PC-3 (cell line): ENCODE measurements at regions of chr19 and their contacts with region 1.

Region 1: GRCh38 chr19:13588957-13589833 is 82.9 kb upstream of the CACNA1A start:
- DNase-seq: peak; percentile 84
- ATAC-seq: peak; percentile 98
- H3K4me3 ChIP-seq: peak overlapping the region; percentile 51; the same call in 1 of the 2 replicates
- H3K27ac ChIP-seq: no peak overlapping the region
- H3K4me1 ChIP-seq: no peaks in the 10 kb centered on the region
- H3K27me3 ChIP-seq: no peaks in the 10 kb centered on the region
- CTCF ChIP-seq: peak; percentile 99

Region 2: GRCh38 chr19:13277104-13277809 is 311.9 kb before region 1 on chr19:
- CTCF ChIA-PET with region 1: interaction called, 6 read pairs
- POLR2A ChIA-PET with region 1: no interaction called
- intact Hi-C with region 1: loop called (anchors 1 kb)
- DNase-seq: peak; percentile 96
- ATAC-seq: peak; percentile 97
- H3K4me3 ChIP-seq: peak overlapping the region; percentile 37; the same call in 1 of the 2 replicates
- H3K27ac ChIP-seq: no peak overlapping the region
- H3K4me1 ChIP-seq: no peaks in the 10 kb centered on the region
- H3K27me3 ChIP-seq: 0 out of 2 replicates have a peak, but pooled peaks cover 1% of the 10 kb centered on the region
- CTCF ChIP-seq: peak; percentile 86

Region 3: GRCh38 chr19:13366529-13367143 is 222.6 kb before region 1 on chr19:
- CTCF ChIA-PET with region 1: no interaction called
- POLR2A ChIA-PET with region 1: no interaction called
- intact Hi-C with region 1: loop called (anchors 2 kb)
- DNase-seq: peak; percentile 81
- ATAC-seq: peak; percentile 56
- H3K4me3 ChIP-seq: no peak overlapping the region
- H3K27ac ChIP-seq: no peak overlapping the region
- H3K4me1 ChIP-seq: no peaks in the 10 kb centered on the region
- H3K27me3 ChIP-seq: peaks cover 10% of the 10 kb centered on the region
- CTCF ChIP-seq: peak; percentile 93

Region 4: GRCh38 chr19:13537454-13537853 is 51.7 kb before region 1 on chr19:
- CTCF ChIA-PET with region 1: no interaction called
- POLR2A ChIA-PET with region 1: no interaction called
- intact Hi-C with region 1: no loop called
- DNase-seq: no peak
- ATAC-seq: no peak
- H3K4me3 ChIP-seq: no peak overlapping the region
- H3K27ac ChIP-seq: no peak overlapping the region
- H3K4me1 ChIP-seq: no peaks in the 10 kb centered on the region
- H3K27me3 ChIP-seq: peaks cover 54% of the 10 kb centered on the region
- CTCF ChIP-seq: no peak